ENCODE measurements at regions of chr1 and their contacts with region 1.

Region 1: GRCh38 chr1:179476484-179476883 is 99.3 kb downstream of the NPHS2 start:
- DNase-seq: no peak
- H3K4me3 ChIP-seq: no peak overlapping the region
- CTCF ChIP-seq: no peak
- POLR2A ChIP-seq: no peak

Region 2: GRCh38 chr1:179424610-179425009 is 51.9 kb before region 1 on chr1:
- intact Hi-C with region 1: loop called (anchors 5 kb)
- DNase-seq: no peak
- H3K4me3 ChIP-seq: no peak overlapping the region
- CTCF ChIP-seq: no peak
- POLR2A ChIP-seq: no peak

Region 3: DNA sequence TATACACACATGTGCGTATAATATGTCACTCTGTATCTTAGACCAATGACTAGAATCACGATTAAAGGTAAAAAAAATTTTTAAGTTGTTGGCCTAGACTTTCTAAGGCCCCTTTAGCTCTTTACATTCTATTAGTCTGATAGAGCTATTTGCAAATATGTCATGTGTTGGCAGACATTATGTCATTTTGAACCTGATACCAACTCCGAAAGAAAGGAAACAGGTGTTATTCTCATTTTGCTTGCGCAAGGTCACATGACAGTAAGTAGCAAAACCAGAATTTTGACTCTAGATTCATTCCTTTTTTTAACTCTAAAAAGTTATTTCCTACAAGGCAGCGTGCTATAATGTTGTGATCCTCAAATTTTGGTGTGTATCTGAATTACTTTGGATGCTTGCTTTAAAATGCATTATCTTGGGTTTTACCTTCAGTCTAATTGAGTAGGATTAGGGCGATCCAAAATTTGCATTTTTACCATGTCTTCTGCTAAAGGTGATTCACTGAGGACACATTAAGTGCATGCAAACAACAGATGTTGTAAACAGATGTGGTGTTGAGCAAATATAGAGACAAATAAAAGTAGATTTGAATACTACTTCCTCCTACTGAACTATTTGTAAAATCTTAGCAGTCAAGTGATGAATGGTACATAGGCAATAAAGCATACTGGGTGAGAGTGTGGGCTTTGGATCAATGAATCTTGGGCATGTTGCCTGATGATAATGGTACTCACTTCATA is 1372.7 kb after region 1 on chr1:
- intact Hi-C with region 1: no loop called
- DNase-seq: no peak
- H3K4me3 ChIP-seq: no peak overlapping the region
- CTCF ChIP-seq: no peak
- POLR2A ChIP-seq: no peak